Mammary epithelial cell (primary cell): ENCODE measurements at regions of chr17 and their contacts with region 1.

Region 1: GRCh38 chr17:52079496-52079895 is 79.0 kb downstream of the CA10 start:
- DNase-seq: peak; percentile 12
- H3K4me3 ChIP-seq: no peak overlapping the region
- H3K27ac ChIP-seq: no peak overlapping the region
- H3K4me1 ChIP-seq: peaks cover 3% of the 10 kb centered on the region
- H3K27me3 ChIP-seq: no peaks in the 10 kb centered on the region
- CTCF ChIP-seq: no peak

Region 2: DNA sequence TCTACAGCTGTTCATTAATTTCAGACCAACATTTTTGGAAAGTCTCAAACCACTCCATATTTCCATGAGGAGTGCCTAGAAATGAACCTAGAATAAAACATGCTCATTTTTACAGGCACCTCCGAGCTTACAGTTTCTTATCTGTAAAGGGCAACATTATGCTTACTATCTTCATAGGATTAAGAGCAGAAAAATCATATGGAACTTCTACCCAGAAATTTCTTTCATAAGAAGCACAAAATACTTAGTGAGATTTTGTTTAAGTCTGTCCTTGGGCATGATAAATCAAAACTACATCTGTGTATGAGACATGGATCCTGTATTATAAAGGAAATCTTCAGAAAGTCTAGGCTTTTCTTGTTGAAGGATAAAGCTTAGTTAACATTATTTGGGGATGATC is 108.4 kb before region 1 on chr17:
- CTCF ChIA-PET with region 1: no interaction called
- dilution Hi-C with region 1: loop called (anchors 5 kb)
- in situ Hi-C with region 1: no loop called
- intact Hi-C with region 1: no loop called
- DNase-seq: no peak
- H3K4me3 ChIP-seq: no peak overlapping the region
- H3K27ac ChIP-seq: no peak overlapping the region
- H3K4me1 ChIP-seq: no peaks in the 10 kb centered on the region
- H3K27me3 ChIP-seq: no peaks in the 10 kb centered on the region
- CTCF ChIP-seq: no peak

Region 3: DNA sequence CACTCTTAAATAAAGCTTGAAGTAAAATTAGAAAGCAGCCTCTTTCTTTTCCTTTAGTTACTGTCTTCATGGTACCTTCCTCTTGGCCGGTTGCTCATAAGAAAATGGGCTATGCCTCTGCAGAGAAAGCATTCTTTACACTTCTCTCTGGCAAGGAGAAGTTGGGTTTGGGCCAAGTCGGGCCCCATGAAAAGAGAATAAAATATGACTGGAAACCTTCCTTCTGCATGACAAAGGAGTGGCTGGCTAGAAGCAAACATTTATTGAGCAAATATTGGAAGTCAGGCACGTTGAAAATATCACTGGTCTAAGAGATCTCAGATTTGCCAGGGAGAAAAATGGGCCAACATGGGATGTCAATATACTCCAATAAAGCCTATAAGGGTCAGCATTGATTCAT is 47.0 kb before region 1 on chr17:
- CTCF ChIA-PET with region 1: no interaction called
- dilution Hi-C with region 1: loop called (anchors 5 kb)
- in situ Hi-C with region 1: no loop called
- intact Hi-C with region 1: no loop called
- DNase-seq: no peak
- H3K4me3 ChIP-seq: no peak overlapping the region
- H3K27ac ChIP-seq: no peak overlapping the region
- H3K4me1 ChIP-seq: peaks cover 9% of the 10 kb centered on the region
- H3K27me3 ChIP-seq: no peaks in the 10 kb centered on the region
- CTCF ChIP-seq: no peak

Region 4: GRCh38 chr17:52191491-52191890 is 112.0 kb after region 1 on chr17:
- CTCF ChIA-PET with region 1: no interaction called
- dilution Hi-C with region 1: no loop called
- in situ Hi-C with region 1: no loop called
- intact Hi-C with region 1: no loop called
- DNase-seq: no peak
- H3K4me3 ChIP-seq: no peak overlapping the region
- H3K27ac ChIP-seq: no peak overlapping the region
- H3K4me1 ChIP-seq: no peaks in the 10 kb centered on the region
- H3K27me3 ChIP-seq: no peaks in the 10 kb centered on the region
- CTCF ChIP-seq: no peak